HAP-1 (cell line): ENCODE measurements at regions of chr17 and their contacts with region 1.

Region 1: GRCh38 chr17:27677191-27677590 is 46.2 kb downstream of the LGALS9 start:
- DNase-seq: no peak
- H3K4me3 ChIP-seq: no peak overlapping the region
- H3K4me1 ChIP-seq: no peaks in the 10 kb centered on the region
- H3K27me3 ChIP-seq: no peaks in the 10 kb centered on the region

Region 2: DNA sequence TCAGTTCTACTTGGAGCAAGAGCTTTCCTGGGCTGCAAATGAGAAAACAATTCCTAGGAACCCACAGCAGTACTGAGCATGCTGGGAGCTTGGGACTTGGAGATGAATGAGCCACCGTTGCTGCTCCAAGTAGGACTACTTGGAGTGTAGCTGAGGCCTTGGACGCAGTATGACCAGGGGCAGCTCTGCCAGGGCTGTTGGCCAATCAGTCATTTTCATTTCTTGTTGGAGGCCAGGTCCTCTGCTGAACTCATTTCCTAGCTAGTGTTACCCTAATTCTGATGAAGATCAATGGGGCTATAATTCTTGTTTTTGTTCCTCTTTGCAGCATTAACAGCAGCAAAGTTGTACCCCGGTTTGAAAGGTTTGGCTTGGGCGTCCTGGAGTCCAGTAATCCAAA is 54.2 kb before region 1 on chr17:
- in situ Hi-C with region 1: loop called (anchors 10 kb)
- DNase-seq: no peak
- H3K4me3 ChIP-seq: no peak overlapping the region
- H3K4me1 ChIP-seq: no peaks in the 10 kb centered on the region
- H3K27me3 ChIP-seq: no peaks in the 10 kb centered on the region

Region 3: DNA sequence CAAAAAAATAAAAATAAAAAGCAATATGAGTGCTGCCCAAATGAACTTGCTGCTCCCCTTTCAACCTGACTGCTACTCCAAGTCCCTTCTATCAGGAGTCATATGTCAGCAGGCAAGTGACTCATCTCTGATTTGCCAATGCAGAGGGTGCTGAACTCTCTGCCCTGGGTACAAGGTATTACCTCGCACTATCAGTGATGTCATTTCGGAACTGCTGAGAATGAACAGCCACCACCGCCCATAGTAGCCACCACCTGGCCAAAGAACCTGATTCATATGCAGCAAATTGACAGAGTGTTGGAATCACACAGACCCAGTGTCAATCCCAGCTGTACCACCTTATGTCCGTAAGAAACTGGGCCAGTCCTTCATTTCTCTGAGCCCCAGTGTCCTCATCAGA is 184.8 kb after region 1 on chr17:
- in situ Hi-C with region 1: loop called (anchors 25 kb)
- DNase-seq: no peak
- H3K4me3 ChIP-seq: no peak overlapping the region
- H3K4me1 ChIP-seq: no peaks in the 10 kb centered on the region
- H3K27me3 ChIP-seq: no peaks in the 10 kb centered on the region